ENCODE measurements at regions of chr13 and their contacts with region 1.

Region 1: DNA sequence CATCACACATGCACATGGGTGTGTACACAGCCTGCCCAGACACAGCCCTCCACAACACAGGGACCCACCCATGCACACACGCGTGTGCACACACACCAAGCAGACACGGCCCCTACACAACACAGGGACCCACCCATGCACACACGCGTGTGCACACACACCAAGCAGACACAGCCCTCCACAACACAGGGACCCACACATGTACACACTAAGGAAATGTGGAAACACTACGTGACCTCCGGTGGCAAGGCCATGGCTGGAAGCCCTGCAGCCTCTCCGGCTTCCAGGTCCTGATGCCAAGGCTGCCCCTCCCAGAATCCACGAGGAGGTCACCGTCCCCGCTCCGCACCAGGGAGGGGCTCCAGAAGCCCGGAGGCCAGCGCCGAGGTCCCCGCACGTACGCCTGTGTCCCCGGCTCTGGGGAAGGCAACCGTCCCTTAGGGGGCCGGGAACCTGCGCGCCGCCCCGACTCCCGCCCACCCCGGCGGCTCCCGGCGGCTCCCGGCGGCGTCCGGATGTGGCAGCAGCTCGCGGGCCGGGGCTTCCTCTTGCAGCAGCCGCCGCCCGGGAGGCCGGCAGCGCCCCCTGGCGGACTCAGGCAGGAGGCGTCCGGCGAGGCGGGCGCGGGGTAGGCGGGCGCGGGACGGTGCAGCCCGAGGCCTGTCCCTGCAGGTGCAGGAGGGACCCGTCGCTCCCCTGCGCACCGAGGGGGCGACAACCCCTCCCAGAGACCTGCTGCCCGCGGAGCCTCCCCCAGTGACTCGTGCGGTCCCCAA is 29.8 kb upstream of the GRTP1 start:
- DNase-seq: peak; percentile 79 to 88 (median 84)
- ATAC-seq: peak; percentile 95
- H3K4me3 ChIP-seq: peak overlapping the region; percentile 44 to 66
- H3K27ac ChIP-seq: peak overlapping the region in 3 of 4 donors; percentile 22 to 39 (median 36)
- H3K4me1 ChIP-seq: peaks cover 12% of the 10 kb centered on the region
- H3K27me3 ChIP-seq: no peaks in the 10 kb centered on the region
- CTCF ChIP-seq: peak; percentile 33 to 98 (median 95)
- POLR2A ChIP-seq: peak in 1 of 3 donors; percentile 16

Region 2: DNA sequence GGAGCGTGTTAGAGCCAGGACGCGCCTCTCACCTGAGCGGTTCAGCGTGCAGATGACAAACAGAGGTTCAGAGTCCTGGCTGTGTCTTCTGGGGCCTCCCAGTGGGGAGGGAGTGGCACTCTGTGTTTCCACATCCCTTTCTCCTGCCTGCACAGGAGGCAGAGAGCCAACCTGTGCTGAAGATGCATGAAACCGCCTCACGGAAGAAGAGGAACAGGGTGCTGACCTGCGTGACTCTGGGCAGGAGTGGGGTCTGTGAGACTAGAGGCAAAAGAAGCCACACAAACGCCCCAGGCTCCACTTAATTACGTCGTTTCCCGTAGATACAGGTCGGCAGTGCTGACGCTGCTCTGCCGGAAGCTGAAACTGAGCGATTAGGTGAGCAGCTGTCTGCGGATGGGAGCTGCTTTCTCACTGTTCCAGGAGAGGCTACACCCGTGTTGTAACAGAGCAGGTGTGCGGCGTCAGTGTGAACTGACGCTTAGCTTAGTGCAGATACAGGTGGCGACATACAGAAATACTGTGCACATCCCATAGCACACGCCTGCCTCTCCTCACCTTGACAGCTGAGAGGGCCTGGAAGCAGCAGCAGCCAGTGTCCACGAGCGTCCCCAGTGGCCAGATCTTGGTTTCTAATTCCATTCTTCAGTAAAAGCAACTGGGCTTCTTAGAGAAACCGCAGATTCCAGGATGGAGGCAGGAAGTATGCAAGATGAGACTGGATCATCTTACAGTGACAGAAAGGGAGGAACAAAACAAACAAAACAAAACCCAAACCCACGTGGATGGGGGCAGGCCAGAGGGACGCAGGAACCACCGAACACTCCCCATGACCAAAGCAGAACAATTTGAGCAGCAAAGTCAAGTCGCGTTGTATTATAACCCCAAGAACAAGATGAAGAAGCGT is 462.5 kb before region 1 on chr13:
- intact Hi-C with region 1: loop called (anchors 10 kb)
- DNase-seq: peak in 2 of 4 donors; percentile 33 to 37
- ATAC-seq: no peak
- H3K4me3 ChIP-seq: no peak overlapping the region
- H3K27ac ChIP-seq: peak overlapping the region in 1 of 4 donors; percentile 3
- H3K4me1 ChIP-seq: peaks cover 16% of the 10 kb centered on the region
- H3K27me3 ChIP-seq: no peaks in the 10 kb centered on the region
- CTCF ChIP-seq: peak in 4 of 7 experiments; percentile 17 to 34 (median 26)
- POLR2A ChIP-seq: no peak

Region 3: DNA sequence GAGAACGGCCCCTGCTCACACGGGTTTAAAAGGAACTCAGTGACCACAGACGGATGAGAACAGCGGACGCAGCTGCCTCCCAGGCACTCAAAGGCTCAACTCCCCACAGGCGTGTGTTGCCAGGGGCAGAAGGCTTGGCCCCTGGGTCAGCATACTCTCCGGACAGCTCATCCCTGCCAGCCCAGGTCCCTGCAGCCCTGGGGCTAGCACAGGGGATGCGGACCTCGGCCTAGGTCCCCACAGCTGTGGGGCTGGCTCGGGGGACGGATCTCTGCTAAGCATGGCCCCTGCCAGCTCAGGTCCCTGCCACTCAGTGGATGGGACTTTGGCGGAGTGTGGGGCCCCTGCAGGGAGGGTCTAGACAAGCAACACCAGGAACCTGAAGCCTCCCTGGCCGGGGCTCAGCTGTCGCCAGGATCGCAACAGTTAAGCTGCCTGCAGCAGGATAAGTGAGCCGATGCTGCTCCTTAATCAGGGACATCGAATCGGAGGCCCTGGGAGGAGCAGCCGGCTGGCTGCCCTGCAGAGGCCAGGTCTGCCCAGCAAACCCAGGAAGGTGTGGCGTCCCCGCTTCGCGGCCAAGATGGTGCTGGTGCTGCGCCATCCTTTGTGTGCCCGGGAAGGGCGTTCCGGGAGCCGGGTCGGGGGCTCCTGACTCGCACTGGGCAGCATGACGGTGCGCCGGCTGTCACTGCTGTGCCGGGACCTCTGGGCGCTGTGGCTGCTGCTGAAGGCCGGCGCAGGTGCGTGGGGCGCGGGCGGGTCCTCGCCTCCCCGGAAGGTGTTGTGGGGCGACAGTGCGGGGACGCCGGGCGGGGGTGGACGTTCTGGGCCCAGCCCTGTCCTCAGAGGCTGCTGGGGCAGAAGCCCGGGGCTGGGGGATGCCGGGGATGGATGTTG is 392.3 kb before region 1 on chr13:
- intact Hi-C with region 1: no loop called
- DNase-seq: peak; percentile 63 to 80 (median 76)
- ATAC-seq: peak; percentile 79
- H3K4me3 ChIP-seq: no peak overlapping the region
- H3K27ac ChIP-seq: peak overlapping the region in 3 of 4 donors; percentile 9 to 46 (median 44)
- H3K4me1 ChIP-seq: peaks cover 25% of the 10 kb centered on the region
- H3K27me3 ChIP-seq: no peaks in the 10 kb centered on the region
- CTCF ChIP-seq: no peak
- POLR2A ChIP-seq: peak in 1 of 3 donors; percentile 26

Region 4: GRCh38 chr13:113275387-113275786 is 118.4 kb before region 1 on chr13:
- intact Hi-C with region 1: loop called (anchors 10 kb)
- DNase-seq: peak; percentile 52 to 67 (median 60)
- ATAC-seq: peak; percentile 93
- H3K4me3 ChIP-seq: no peak overlapping the region
- H3K27ac ChIP-seq: no peak overlapping the region
- H3K4me1 ChIP-seq: no peaks in the 10 kb centered on the region
- H3K27me3 ChIP-seq: no peaks in the 10 kb centered on the region
- CTCF ChIP-seq: peak; percentile 43 to 72 (median 66)
- POLR2A ChIP-seq: no peak

Measured in body of pancreas (tissue), 4 donors.